ENCODE measurements at regions of chr9 and their contacts with region 1.

Region 1: GRCh38 chr9:97598461-97599288 is 34.5 kb downstream of the TSTD2 start:
- DNase-seq: peak; percentile 86
- ATAC-seq: peak; percentile 93
- H3K4me3 Mint-ChIP-seq: no peak overlapping the region
- H3K27ac Mint-ChIP-seq: no peak overlapping the region
- H3K4me1 Mint-ChIP-seq: peaks cover 5% of the 10 kb centered on the region
- H3K27me3 Mint-ChIP-seq: peaks cover 1% of the 10 kb centered on the region

Region 2: DNA sequence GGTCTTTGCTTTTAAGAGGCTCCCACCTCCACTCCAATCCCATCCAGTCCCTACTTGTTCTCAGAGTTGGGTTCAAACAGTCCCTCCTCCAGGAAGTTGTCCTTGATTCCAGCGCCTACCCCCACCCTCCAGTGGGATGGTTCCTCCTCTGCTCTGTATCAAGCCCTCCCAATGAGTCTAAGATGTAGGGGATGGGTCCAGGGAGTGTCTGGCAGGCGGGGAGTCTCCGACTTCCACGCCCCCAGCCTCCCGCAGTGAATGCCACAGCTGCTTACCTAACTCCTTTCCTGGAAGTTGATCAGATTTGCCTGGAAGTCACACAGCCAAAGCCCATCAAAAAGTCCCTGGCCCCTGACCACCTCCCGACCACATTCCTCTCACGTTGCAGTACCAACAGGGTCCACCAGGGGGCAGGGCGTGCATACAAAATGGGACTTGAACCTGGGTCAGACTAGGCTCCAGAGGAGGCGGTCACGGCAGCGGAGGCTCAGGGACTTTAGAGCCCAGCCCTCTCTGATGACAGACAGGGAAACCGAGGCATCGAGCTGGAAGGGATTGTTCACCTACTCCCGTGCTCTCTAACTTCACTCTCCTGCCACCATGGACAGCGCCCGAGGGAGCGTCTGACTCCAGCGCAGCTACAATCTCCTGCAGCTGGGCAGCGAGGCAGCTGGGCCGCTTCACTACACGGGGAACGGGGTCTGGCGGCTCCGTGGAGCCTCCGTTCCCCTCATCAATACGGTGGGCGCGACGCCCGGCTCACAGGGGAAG is 211.8 kb before region 1 on chr9:
- CTCF ChIA-PET with region 1: interaction called, 17 read pairs
- POLR2A ChIA-PET with region 1: no interaction called
- DNase-seq: peak; percentile 80
- ATAC-seq: peak; percentile 77
- H3K4me3 Mint-ChIP-seq: no peak overlapping the region
- H3K27ac Mint-ChIP-seq: peak overlapping the region; percentile 52
- H3K4me1 Mint-ChIP-seq: peaks cover 21% of the 10 kb centered on the region
- H3K27me3 Mint-ChIP-seq: peaks cover 23% of the 10 kb centered on the region

Region 3: DNA sequence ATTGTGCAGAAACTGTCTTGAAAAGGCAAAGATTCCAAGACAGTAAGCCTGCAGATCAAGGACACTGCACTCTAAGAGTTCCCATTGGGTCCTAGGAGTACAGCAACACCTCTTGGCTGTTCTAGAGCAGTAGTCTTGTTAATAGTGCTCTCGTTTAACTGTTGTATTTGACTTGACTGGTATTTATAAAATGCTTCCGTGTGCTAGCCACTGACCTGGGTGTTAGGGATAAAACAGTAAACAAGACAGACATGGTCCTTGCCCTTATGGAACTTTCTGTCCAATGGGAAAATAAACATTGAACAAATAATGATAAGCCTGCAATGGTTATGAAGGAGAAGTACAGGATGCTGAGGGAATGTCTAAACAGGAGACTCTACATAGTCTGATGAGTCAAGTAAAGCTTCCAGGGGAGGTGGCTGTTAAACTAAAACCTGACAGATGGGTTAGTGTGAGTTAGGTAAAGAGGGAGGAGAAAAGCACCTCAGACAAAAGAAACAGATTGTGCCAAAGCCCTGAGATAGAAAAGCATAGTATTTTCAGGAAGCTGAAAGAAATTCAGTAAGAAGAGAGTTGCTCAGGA is 153.5 kb before region 1 on chr9:
- CTCF ChIA-PET with region 1: interaction called, 15 read pairs
- POLR2A ChIA-PET with region 1: no interaction called
- DNase-seq: no peak
- ATAC-seq: no peak
- H3K4me3 Mint-ChIP-seq: no peak overlapping the region
- H3K27ac Mint-ChIP-seq: no peak overlapping the region
- H3K4me1 Mint-ChIP-seq: no peaks in the 10 kb centered on the region
- H3K27me3 Mint-ChIP-seq: no peaks in the 10 kb centered on the region

Region 4: GRCh38 chr9:97487107-97487506 is 111.6 kb before region 1 on chr9:
- CTCF ChIA-PET with region 1: interaction called, 10 read pairs
- POLR2A ChIA-PET with region 1: no interaction called
- DNase-seq: no peak
- ATAC-seq: no peak
- H3K4me3 Mint-ChIP-seq: no peak overlapping the region
- H3K27ac Mint-ChIP-seq: no peak overlapping the region
- H3K4me1 Mint-ChIP-seq: no peaks in the 10 kb centered on the region
- H3K27me3 Mint-ChIP-seq: no peaks in the 10 kb centered on the region

Region 5: GRCh38 chr9:97525451-97525850 is 73.2 kb before region 1 on chr9:
- CTCF ChIA-PET with region 1: no interaction called
- POLR2A ChIA-PET with region 1: no interaction called
- DNase-seq: no peak
- ATAC-seq: no peak
- H3K4me3 Mint-ChIP-seq: no peak overlapping the region
- H3K27ac Mint-ChIP-seq: no peak overlapping the region
- H3K4me1 Mint-ChIP-seq: no peaks in the 10 kb centered on the region
- H3K27me3 Mint-ChIP-seq: peaks cover 5% of the 10 kb centered on the region

Region 6: DNA sequence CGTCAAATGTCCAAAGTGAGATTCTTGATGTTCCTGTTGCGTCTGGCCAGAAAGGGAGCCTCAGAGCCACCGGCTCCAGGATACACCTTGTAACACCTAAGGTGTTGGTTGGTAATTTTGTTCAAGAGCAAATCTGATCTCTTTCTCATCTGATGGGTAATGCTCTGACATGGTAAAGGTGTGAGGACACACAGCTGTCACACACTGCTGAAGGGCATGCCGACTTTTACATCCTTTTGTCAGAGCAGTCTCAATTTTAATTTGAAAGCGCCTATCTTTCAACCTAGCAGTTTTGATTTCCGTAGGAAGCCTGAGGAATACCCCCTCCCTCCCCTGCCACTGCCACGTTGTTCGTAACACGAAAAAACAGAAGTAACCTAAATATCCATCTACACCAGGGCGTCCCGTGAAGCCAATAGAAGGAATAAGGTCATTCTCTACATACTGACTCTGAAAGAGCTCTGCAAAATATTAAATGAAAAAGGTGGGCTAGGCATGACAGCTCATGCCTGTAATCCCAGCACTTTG is 22.9 kb before region 1 on chr9:
- CTCF ChIA-PET with region 1: interaction called, 17 read pairs
- POLR2A ChIA-PET with region 1: no interaction called
- DNase-seq: no peak
- ATAC-seq: no peak
- H3K4me3 Mint-ChIP-seq: no peak overlapping the region
- H3K27ac Mint-ChIP-seq: no peak overlapping the region
- H3K4me1 Mint-ChIP-seq: peaks cover 12% of the 10 kb centered on the region
- H3K27me3 Mint-ChIP-seq: no peaks in the 10 kb centered on the region

Region 7: GRCh38 chr9:97632985-97633858 is 34.5 kb after region 1 on chr9 and contains the starts of genes NCBP1 and TSTD2:
- CTCF ChIA-PET with region 1: interaction called, 13 read pairs
- POLR2A ChIA-PET with region 1: no interaction called
- DNase-seq: peak; percentile 97
- ATAC-seq: peak; percentile 92
- H3K4me3 Mint-ChIP-seq: peak within 1 kb of the TSS; percentile 86
- H3K27ac Mint-ChIP-seq: peak within 1 kb of the TSS; percentile 100
- H3K4me1 Mint-ChIP-seq: peaks cover 29% of the 10 kb centered on the region
- H3K27me3 Mint-ChIP-seq: no peaks in the 10 kb centered on the region
- total RNA-seq, gene NCBP1: 45.1 to 45.9 TPM
- total RNA-seq, gene TSTD2: 13.0 to 15.6 TPM

Measured in activated CD8-positive, alpha-beta T cell treated with anti-CD3 and anti-CD28 coated beads, Interleukin-2, amount 10 ng/mL, durations not matched to agents 7 days and 5 days (primary cell).